Motor neuron (in vitro differentiated cells): ENCODE measurements at regions of chrX and their contacts with region 1.

Region 1: GRCh38 chrX:118644378-118644777 is 83.0 kb upstream of the IL13RA1 start:
- ATAC-seq: peak in 3 of 8 experiments; percentile 45 to 59 (median 52)
- H3K4me3 ChIP-seq: no peak overlapping the region
- H3K27ac ChIP-seq: no peak overlapping the region
- H3K4me1 ChIP-seq: no peaks in the 10 kb centered on the region

Region 2: GRCh38 chrX:118807151-118808017 is 163.0 kb after region 1 on chrX:
- in situ Hi-C with region 1: loop called in 1 of 9 experiments (anchors 25 kb)
- ATAC-seq: peak in 4 of 8 experiments; percentile 36 to 69 (median 44)
- H3K4me3 ChIP-seq: no peak overlapping the region
- H3K27ac ChIP-seq: no peak overlapping the region
- H3K4me1 ChIP-seq: no peaks in the 10 kb centered on the region